ENCODE measurements at regions of chr2 and their contacts with region 1.

Region 1: DNA sequence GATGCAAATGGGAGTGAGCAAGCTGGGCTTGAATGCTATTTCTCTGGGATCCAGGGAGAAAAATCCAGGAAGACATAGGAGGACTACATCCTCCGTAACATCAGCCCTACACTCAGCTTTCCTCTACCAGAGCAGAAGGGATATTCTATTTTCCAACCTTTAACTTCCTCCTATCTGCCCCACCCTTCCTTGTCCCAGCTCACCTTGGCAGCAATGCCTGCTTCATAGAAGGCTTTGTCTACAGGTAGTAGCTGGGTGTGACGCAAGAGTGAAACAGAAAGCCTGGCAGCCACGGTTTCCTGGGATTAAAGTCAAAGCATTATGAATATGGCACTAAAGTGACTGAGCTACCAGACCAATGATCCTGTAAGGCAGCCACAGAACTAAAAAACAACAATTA is 3.9 kb downstream of the KRTCAP3 start:
- DNase-seq: no peak
- ATAC-seq: no peak
- H3K4me3 ChIP-seq: no peak overlapping the region
- H3K27ac ChIP-seq: no peak overlapping the region
- H3K4me1 ChIP-seq: no peaks in the 10 kb centered on the region
- CTCF ChIP-seq: no peak
- EP300 ChIP-seq: no peak
- POLR2A ChIP-seq: no peak
- RAD21 ChIP-seq: no peak

Region 2: GRCh38 chr2:27428213-27428977 is 17.7 kb before region 1 on chr2 and contains the start of gene NRBP1:
- CTCF ChIA-PET with region 1: interaction called, 10 read pairs
- POLR2A ChIA-PET with region 1: interaction called, 7 read pairs
- DNase-seq: peak; percentile 88 to 93
- ATAC-seq: peak; percentile 90 to 94
- H3K4me3 ChIP-seq: peak within 1 kb of the TSS; percentile 89
- H3K27ac ChIP-seq: peak within 1 kb of the TSS; percentile 97 to 98
- H3K4me1 ChIP-seq: peaks cover 27% of the 10 kb centered on the region
- CTCF ChIP-seq: peak; percentile 35; the same call in 1 of the 3 replicates
- EP300 ChIP-seq: no peak
- POLR2A ChIP-seq: peak; percentile 93
- RAD21 ChIP-seq: no peak; a peak in 1 of 5 replicates
- polyA plus RNA-seq, gene NRBP1: 229 and 231 TPM in 2 replicates

Measured in A549 (cell line).